Activated CD4-positive, alpha-beta memory T cell treated with anti-CD3 and anti-CD28 coated beads, Interleukin-2, amount 10 ng/mL, durations not matched to agents 7 days and 5 days (primary cell): ENCODE measurements at regions of chr9 and their contacts with region 1.

Region 1: GRCh38 chr9:134135343-134136118 is at the start of gene WDR5:
- DNase-seq: peak; percentile 91
- H3K4me3 Mint-ChIP-seq: peak within 1 kb of the TSS; percentile 90
- H3K27ac Mint-ChIP-seq: peak within 1 kb of the TSS; percentile 84
- H3K4me1 Mint-ChIP-seq: peaks cover 37% of the 10 kb centered on the region
- H3K27me3 Mint-ChIP-seq: no peaks in the 10 kb centered on the region
- total RNA-seq, gene WDR5: 32.1 to 32.7 TPM

Region 2: DNA sequence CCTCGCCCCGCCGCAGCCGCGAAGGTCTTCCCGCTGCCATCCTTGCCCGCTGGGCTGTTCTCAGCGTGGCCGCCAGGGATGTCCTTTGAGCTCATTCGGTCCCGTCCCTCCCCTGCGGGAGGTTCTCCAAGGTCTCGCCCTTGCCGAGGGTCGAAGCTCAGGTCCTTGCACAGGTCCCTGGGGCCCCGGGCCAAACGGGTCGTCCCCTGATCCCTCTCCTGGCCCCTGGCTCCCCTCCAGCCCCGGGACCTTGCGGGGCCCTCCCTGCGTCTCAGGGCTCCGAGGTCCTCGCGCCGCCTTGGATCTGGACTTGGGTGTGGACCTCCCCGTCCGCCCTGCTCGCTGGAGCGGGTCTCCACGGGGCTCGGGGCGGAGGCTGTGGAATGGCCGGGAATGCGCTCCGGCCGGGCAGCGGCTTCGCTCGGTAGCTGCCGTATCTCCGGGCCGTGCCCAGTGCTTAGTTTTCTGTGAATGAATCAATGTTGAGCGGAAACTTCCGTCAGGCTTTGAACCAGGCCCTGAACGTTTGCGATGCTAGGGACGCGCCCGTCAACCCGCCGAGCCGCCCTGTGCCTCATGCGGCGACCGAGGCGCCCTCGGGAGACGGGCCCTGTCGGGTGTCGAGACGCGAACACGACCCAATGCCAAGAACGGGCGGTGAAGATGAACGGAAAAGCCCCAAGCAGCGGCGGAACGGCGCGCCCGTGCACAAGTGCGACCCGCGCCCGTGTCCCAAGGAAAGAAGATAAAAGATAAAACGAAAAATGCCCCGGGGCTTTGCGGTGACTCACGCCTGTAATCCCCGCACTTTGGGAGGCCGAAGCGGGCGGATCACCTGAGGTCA is 28.0 kb after region 1 on chr9:
- CTCF ChIA-PET with region 1: interaction called, 15 read pairs
- POLR2A ChIA-PET with region 1: interaction called, 43 read pairs
- DNase-seq: peak; percentile 72
- H3K4me3 Mint-ChIP-seq: no peak overlapping the region
- H3K27ac Mint-ChIP-seq: no peak overlapping the region
- H3K4me1 Mint-ChIP-seq: peaks cover 23% of the 10 kb centered on the region
- H3K27me3 Mint-ChIP-seq: no peaks in the 10 kb centered on the region

Region 3: GRCh38 chr9:134698587-134699342 is 563.2 kb after region 1 on chr9:
- CTCF ChIA-PET with region 1: no interaction called
- POLR2A ChIA-PET with region 1: no interaction called
- DNase-seq: peak; percentile 54
- H3K4me3 Mint-ChIP-seq: no peak overlapping the region
- H3K27ac Mint-ChIP-seq: no peak overlapping the region
- H3K4me1 Mint-ChIP-seq: no peaks in the 10 kb centered on the region
- H3K27me3 Mint-ChIP-seq: no peaks in the 10 kb centered on the region